ENCODE measurements at regions of chr2 and their contacts with region 1.

Region 1: DNA sequence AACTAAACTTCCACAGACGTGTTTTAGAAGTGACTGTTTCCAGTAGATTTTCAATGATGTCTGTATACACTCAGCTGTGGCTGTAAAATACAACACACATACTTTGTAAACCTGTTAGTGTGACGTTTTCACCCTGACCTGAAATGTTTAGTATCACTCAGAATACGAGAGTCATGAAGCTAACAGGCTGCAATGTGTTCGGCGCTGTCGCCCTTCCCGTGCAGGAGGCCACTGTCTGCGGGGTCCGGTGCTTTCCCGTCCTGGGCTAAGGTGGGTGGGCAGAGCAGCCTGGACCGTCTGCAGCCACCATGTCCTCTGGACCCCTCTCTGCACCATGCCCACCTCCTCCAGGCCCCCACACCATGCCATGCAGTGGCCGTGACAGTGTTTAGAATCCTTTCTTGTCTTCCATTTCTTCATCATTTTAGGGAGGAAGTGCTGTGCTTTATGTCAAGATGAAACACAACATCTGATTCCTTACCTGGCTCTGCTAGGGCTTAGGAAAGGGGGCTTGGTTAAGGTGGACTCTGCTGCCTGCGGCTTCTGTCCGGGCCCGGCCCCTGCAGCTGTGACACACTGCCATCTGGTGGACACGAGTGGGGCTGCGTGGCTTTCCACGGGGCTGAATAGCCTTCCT is 53.8 kb upstream of the RBM44 start:
- DNase-seq: peak; percentile 63 to 81
- H3K4me3 ChIP-seq: no peak overlapping the region
- H3K27ac ChIP-seq: peak overlapping the region; percentile 19 to 62
- H3K4me1 ChIP-seq: no peaks in the 10 kb centered on the region
- H3K27me3 ChIP-seq: no peaks in the 10 kb centered on the region
- CTCF ChIP-seq: peak; percentile 79 to 98 (median 96)
- POLR2A ChIP-seq: no peak

Region 2: DNA sequence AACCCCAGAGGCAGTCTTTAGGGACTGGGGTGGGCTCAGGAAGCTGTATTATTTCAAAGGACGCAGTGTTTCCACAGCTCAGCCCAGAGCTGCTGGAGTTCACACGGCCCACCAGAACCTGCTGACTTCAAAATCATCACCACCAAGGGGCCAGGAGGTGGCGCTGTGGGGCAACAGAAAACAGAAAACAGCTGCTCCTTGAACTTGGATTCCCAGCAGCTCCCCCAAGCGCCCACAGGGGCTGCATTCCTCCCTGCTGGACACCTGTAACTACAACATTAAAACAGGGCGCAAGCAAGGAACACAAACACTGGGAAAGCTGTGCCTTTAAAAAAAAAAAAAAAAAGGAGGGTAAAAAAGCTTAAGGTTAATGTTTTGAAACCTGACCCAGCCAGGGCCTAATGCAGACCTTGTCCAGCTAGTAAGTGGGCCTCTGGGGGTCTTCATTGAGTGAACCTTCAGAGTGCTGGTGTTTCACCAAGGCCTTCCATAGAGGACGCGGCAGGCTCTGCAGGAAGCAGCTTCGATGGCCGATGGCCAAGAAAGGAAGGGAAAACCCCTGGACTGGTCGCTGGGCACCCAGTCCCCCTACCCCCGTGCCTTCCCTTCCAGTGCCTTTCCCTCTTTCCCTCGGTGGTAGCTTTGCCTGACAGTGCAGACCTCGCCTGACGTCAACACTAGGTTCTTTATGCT is 231.8 kb before region 1 on chr2:
- intact Hi-C with region 1: loop called (anchors 5 kb)
- DNase-seq: peak; percentile 87 to 89
- H3K4me3 ChIP-seq: no peak overlapping the region
- H3K27ac ChIP-seq: peak overlapping the region; percentile 66 to 80
- H3K4me1 ChIP-seq: peaks cover 0 to 19% of the 10 kb centered on the region in 2 donors
- H3K27me3 ChIP-seq: no peaks in the 10 kb centered on the region
- CTCF ChIP-seq: peak; percentile 89 to 97 (median 94)
- POLR2A ChIP-seq: no peak

Region 3: GRCh38 chr2:237581751-237582746 is 162.7 kb before region 1 on chr2:
- intact Hi-C with region 1: loop called (anchors 10 kb)
- DNase-seq: peak in 1 of 2 donors; percentile 71
- H3K4me3 ChIP-seq: peak overlapping the region; percentile 2 to 59 (median 34)
- H3K27ac ChIP-seq: peak overlapping the region; percentile 75 to 91
- H3K4me1 ChIP-seq: peaks cover 7 to 11% of the 10 kb centered on the region in 2 donors
- H3K27me3 ChIP-seq: no peaks in the 10 kb centered on the region
- CTCF ChIP-seq: peak in 1 of 3 donors; percentile 39
- POLR2A ChIP-seq: no peak

Region 4: DNA sequence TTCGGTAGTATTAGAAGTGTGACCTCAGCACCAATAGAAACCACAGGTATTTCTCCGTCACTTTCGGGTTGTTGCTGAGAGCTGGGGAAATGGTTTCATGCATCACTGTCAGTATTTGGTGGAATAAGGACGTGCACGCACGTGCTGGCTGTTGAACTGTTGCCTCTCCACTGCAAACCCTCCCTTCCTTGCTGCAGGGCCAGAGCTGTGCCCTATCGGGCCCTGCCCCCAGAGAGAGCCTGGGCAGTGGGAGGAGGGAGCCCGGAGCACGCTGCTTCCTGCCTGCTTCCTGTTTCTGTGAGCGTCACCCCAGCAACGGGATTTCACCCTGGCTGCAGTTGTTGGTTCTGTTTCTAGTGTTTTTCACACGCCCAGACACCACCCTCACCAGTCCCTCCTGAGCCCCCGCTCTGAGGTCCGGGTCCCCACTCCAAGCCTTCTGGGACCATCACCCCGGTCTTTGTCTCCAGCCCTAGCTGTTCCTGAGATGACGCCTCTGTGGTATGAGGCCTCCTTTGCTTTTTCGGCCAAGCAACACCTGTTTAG is 69.9 kb before region 1 on chr2:
- intact Hi-C with region 1: loop called (anchors 10 kb)
- DNase-seq: peak; percentile 80 to 83
- H3K4me3 ChIP-seq: peak overlapping the region in 2 of 3 donors; percentile 39 to 48
- H3K27ac ChIP-seq: peak overlapping the region; percentile 86 to 93
- H3K4me1 ChIP-seq: peaks cover 0 to 6% of the 10 kb centered on the region in 2 donors
- H3K27me3 ChIP-seq: no peaks in the 10 kb centered on the region
- CTCF ChIP-seq: peak in 1 of 3 donors; percentile 33
- POLR2A ChIP-seq: no peak

Measured in breast epithelium (tissue), 4 donors.